A549 (cell line): ENCODE measurements at regions of chr6 and their contacts with region 1.

Region 1: GRCh38 chr6:117449549-117450439 is 24.1 kb upstream of the ROS1 start:
- DNase-seq: peak in 1 of 2 experiments; percentile 77
- ATAC-seq: peak; percentile 36 to 54; a peak in 3 of 6 replicates
- H3K4me3 ChIP-seq: peak overlapping the region; percentile 25; the same call in 1 of the 3 replicates
- H3K27ac ChIP-seq: peak overlapping the region; percentile 96 to 100
- H3K4me1 ChIP-seq: peaks cover 52% of the 10 kb centered on the region
- CTCF ChIP-seq: peak; percentile 76
- EP300 ChIP-seq: no peak
- POLR2A ChIP-seq: no peak
- RAD21 ChIP-seq: peak; percentile 88

Region 2: GRCh38 chr6:117329885-117330284 is 119.9 kb before region 1 on chr6:
- CTCF ChIA-PET with region 1: no interaction called
- POLR2A ChIA-PET with region 1: no interaction called
- DNase-seq: no peak
- ATAC-seq: no peak
- H3K4me3 ChIP-seq: no peak overlapping the region
- H3K27ac ChIP-seq: no peak overlapping the region
- H3K4me1 ChIP-seq: no peaks in the 10 kb centered on the region
- CTCF ChIP-seq: no peak
- EP300 ChIP-seq: no peak
- POLR2A ChIP-seq: no peak
- RAD21 ChIP-seq: no peak

Region 3: GRCh38 chr6:117352466-117353081 is 97.2 kb before region 1 on chr6:
- CTCF ChIA-PET with region 1: interaction called, 11 read pairs
- POLR2A ChIA-PET with region 1: no interaction called
- DNase-seq: peak; percentile 13 to 36
- ATAC-seq: peak; percentile 39 to 80; a peak in 4 of 6 replicates
- H3K4me3 ChIP-seq: no peak overlapping the region
- H3K27ac ChIP-seq: peak overlapping the region; percentile 59 to 83
- H3K4me1 ChIP-seq: peaks cover 12% of the 10 kb centered on the region; the same call in 2 of the 3 replicates
- CTCF ChIP-seq: peak; percentile 54
- EP300 ChIP-seq: no peak
- POLR2A ChIP-seq: no peak
- RAD21 ChIP-seq: peak; percentile 61 to 64

Region 4: DNA sequence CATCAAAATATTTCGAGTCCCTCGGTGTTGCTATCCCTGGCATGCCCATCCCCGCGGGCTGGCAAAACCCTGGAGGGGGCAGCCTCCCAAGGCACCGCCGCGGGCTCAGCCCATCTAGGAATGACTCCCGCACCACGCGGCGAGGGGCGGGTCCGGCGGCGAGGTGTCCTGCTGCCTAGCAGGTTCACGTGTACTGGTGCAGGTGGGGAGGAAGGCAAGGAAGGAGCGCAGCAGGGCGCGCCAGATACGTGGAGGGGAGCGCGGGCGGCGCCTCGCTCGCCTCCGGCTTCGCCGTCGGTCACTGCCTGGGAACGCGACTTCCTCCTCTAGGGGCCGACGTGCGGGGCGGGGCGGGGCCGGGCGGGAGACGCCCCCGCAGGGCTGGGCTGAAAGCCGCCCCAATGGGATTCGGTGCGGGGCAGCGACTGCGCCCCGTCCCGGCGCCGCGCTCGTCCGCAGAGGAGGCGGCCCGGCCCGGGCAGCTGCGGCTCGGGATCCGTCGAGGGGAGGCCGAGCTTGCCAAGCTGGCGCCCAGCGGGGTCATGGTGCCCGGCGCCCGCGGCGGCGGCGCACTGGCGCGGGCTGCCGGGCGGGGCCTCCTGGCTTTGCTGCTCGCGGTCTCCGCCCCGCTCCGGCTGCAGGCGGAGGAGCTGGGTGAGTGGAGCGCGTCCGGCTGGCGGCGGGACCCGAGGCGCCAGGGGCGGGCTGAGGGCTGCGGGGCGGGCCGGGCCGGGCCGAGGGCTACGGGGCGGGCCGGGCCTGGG is 32.6 kb after region 1 on chr6 and contains the start of gene DCBLD1:
- CTCF ChIA-PET with region 1: interaction called, 6 read pairs
- POLR2A ChIA-PET with region 1: interaction called, 14 read pairs
- DNase-seq: peak; percentile 58 to 69
- ATAC-seq: peak; percentile 85 to 89
- H3K4me3 ChIP-seq: peak within 1 kb of the TSS; percentile 82
- H3K27ac ChIP-seq: peak within 1 kb of the TSS; percentile 94 to 99
- H3K4me1 ChIP-seq: peaks cover 32% of the 10 kb centered on the region; the same call in 2 of the 3 replicates
- CTCF ChIP-seq: no peak
- EP300 ChIP-seq: no peak
- POLR2A ChIP-seq: peak; percentile 75
- RAD21 ChIP-seq: 0 out of 5 replicates have a peak, but pooled peaks of 1 of the 2 experiments have one; percentile 15
- polyA plus RNA-seq, gene DCBLD1: 39.3 and 49.1 TPM in 2 replicates

Region 5: DNA sequence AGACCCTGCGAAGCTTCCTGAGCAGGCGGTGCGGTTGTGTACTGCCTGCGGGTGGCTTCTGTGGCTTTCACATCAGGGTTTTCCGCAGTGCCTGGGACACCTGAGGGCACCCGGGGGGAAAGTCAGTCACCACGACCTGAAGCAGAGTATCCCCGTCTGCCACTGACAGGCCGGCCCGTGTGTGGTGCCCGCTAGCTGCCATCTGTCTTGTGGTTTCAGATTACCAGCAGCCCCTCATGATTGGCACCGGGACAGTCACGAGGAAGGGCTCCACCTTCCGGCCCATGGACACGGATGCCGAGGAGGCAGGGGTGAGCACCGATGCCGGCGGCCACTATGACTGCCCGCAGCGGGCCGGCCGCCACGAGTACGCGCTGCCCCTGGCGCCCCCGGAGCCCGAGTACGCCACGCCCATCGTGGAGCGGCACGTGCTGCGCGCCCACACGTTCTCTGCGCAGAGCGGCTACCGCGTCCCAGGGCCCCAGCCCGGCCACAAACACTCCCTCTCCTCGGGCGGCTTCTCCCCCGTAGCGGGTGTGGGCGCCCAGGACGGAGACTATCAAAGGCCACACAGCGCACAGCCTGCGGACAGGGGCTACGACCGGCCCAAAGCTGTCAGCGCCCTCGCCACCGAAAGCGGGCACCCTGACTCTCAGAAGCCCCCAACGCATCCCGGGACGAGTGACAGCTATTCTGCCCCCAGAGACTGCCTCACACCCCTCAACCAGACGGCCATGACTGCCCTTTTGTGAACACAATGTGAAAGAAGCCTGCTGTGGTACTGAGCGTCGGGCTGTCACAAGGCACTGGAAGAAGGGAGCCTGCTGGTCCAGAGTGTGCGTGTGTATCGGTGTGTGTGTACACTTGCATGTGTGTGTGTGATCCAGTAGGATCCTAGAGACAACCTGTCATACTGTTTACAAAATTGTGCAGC is 98.2 kb after region 1 on chr6:
- CTCF ChIA-PET with region 1: interaction called, 23 read pairs
- POLR2A ChIA-PET with region 1: no interaction called
- DNase-seq: no peak
- ATAC-seq: peak; percentile 27 to 28; a peak in 5 of 6 replicates
- H3K4me3 ChIP-seq: no peak overlapping the region
- H3K27ac ChIP-seq: peak overlapping the region; percentile 79 to 88
- H3K4me1 ChIP-seq: peaks cover 87% of the 10 kb centered on the region
- CTCF ChIP-seq: no peak
- EP300 ChIP-seq: no peak
- POLR2A ChIP-seq: no peak
- RAD21 ChIP-seq: no peak

Region 6: GRCh38 chr6:117602151-117602898 is 152.5 kb after region 1 on chr6 and contains the start of gene GOPC:
- CTCF ChIA-PET with region 1: interaction called, 41 read pairs
- POLR2A ChIA-PET with region 1: interaction called, 17 read pairs
- DNase-seq: peak; percentile 92 to 97
- ATAC-seq: peak; percentile 92 to 97
- H3K4me3 ChIP-seq: peak within 1 kb of the TSS; percentile 67
- H3K27ac ChIP-seq: peak within 1 kb of the TSS; percentile 94 to 95
- H3K4me1 ChIP-seq: peaks cover 20% of the 10 kb centered on the region; the same call in 2 of the 3 replicates
- CTCF ChIP-seq: no peak
- EP300 ChIP-seq: no peak
- POLR2A ChIP-seq: peak; percentile 85
- RAD21 ChIP-seq: no peak
- polyA plus RNA-seq, gene GOPC: 27.8 and 38.9 TPM in 2 replicates